MCF 10A (cell line): ENCODE measurements at regions of chr4 and their contacts with region 1.

Region 1: DNA sequence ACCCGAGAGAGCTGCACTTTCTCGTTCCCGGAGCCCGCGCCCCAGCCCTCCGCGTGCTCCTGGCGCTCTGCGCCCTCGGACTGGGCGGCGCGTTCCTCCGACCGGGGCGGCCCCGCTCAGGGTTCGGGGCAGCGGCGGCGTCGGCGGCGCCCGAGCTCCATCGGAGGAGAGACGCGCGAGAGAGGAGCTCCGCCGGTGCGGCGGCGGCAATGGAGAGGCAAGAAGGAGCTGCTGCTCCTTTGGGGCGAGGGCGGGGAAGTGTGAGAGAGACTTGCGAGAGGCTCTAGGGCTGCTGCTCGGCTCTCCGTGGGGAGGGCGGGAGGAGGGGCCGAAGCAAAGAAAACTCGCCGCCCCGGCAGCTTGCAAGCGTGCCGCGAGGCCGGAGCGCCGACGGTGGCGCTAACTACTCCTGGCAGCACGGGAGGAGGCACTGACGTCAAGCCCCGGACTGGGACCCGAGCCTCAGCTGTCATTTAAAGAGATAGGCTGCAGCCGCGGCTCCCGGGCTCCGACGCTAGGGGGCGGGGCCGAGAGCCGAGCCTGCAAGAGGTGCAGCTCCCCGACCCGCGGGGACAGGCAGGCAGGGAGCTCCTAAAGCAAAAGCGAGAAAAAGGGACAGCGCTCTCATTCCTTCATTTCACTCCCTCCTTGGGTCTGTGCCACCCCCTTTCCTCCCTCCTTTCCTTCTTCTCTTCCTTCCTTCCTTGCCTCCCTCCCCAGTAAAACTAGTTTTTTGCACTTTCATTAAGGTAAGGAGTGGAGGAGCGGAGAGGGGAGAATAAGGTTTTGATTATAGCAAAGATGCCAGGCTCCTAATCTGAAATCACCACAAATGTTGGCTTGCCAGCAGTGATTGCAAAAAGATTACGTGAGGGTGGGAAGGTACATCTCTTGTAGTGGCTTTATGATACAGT is at the start of gene KCTD8:
- DNase-seq: peak; percentile 92
- H3K4me3 Mint-ChIP-seq: peak within 1 kb of the TSS; percentile 76
- H3K27ac Mint-ChIP-seq: no peak within 1 kb of the TSS
- H3K4me1 Mint-ChIP-seq: peaks cover 13% of the 10 kb centered on the region
- H3K27me3 Mint-ChIP-seq: no peaks in the 10 kb centered on the region
- CTCF ChIP-seq: peak; percentile 63
- total RNA-seq, gene KCTD8: 0.16 and 0.76 TPM in 2 replicates

Region 2: GRCh38 chr4:43331226-43332051 is 1117.4 kb before region 1 on chr4:
- CTCF ChIA-PET with region 1: no interaction called
- POLR2A ChIA-PET with region 1: no interaction called
- intact Hi-C with region 1: loop called (anchors 10 kb)
- DNase-seq: peak; percentile 83
- H3K4me3 Mint-ChIP-seq: no peak overlapping the region
- H3K27ac Mint-ChIP-seq: peak overlapping the region; percentile 6
- H3K4me1 Mint-ChIP-seq: peaks cover 30% of the 10 kb centered on the region
- H3K27me3 Mint-ChIP-seq: no peaks in the 10 kb centered on the region
- CTCF ChIP-seq: no peak

Region 3: GRCh38 chr4:43716721-43717395 is 731.9 kb before region 1 on chr4:
- CTCF ChIA-PET with region 1: no interaction called
- POLR2A ChIA-PET with region 1: no interaction called
- intact Hi-C with region 1: no loop called
- DNase-seq: no peak
- H3K4me3 Mint-ChIP-seq: no peak overlapping the region
- H3K27ac Mint-ChIP-seq: no peak overlapping the region
- H3K4me1 Mint-ChIP-seq: no peaks in the 10 kb centered on the region
- H3K27me3 Mint-ChIP-seq: no peaks in the 10 kb centered on the region
- CTCF ChIP-seq: no peak

Region 4: DNA sequence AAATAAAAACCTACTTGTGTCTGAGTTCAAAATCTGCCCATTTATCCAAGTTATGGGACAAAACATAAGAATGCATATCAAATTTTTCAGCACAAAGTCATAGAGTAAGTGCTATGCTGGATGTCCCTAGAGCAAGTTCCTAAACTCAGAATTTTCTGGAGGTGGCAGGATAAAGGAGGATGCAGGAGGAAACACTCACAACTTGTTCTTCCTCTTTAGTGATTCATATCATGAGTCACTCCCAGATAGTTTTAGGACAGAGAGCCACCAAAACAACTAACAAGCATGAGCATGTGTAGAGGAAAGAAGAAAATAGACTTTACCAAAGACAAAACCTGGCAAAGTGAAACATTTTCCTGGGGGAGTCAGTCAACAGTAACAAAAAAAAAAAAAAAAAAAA is 302.9 kb before region 1 on chr4:
- CTCF ChIA-PET with region 1: no interaction called
- POLR2A ChIA-PET with region 1: no interaction called
- intact Hi-C with region 1: no loop called
- DNase-seq: peak; percentile 74
- H3K4me3 Mint-ChIP-seq: peak overlapping the region; percentile 0
- H3K27ac Mint-ChIP-seq: peak overlapping the region; percentile 78
- H3K4me1 Mint-ChIP-seq: peaks cover 33% of the 10 kb centered on the region
- H3K27me3 Mint-ChIP-seq: no peaks in the 10 kb centered on the region
- CTCF ChIP-seq: no peak

Region 5: DNA sequence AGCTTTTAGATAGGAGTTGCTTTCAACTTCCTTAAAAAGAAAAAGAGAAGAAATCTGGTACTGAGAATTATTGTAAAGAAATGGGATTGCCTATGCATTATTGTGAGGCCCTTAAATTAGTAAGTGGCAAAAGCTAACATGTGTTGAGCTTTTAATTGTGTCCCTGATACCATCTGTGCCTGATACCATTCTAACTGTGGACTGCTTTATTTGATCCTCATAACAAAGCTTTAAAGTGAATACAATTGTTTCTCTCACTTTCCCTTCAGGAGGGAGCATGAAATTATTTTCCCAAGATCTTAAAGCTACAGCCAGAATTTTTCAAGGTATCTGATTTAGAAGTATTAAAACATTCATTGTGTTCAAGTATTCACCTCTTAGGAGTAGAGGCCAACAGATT is 10.1 kb before region 1 on chr4:
- CTCF ChIA-PET with region 1: interaction called, 14 read pairs
- POLR2A ChIA-PET with region 1: interaction called, 11 read pairs
- intact Hi-C with region 1: no loop called
- DNase-seq: no peak
- H3K4me3 Mint-ChIP-seq: no peak overlapping the region
- H3K27ac Mint-ChIP-seq: no peak overlapping the region
- H3K4me1 Mint-ChIP-seq: no peaks in the 10 kb centered on the region
- H3K27me3 Mint-ChIP-seq: no peaks in the 10 kb centered on the region
- CTCF ChIP-seq: no peak

Region 6: DNA sequence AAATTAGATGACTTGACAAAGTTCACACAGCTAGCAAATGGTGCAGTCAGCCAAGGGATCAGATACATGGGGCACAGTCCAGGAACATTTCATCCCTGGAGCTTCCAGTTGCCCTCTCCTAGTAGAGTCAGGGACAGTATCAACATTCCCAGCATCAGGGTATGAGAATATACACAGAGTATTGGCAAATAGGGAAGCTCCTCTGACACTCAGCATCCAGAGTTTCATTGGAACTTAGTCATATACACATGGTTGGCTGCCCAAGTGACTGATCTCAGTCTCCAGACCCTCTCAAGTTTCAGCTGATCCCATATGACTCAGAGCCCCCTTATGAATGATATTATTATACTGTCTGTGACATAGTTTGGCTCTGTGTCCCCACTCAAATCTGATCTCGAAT is 13.5 kb after region 1 on chr4:
- CTCF ChIA-PET with region 1: interaction called, 18 read pairs
- POLR2A ChIA-PET with region 1: interaction called, 3 read pairs
- intact Hi-C with region 1: no loop called
- DNase-seq: no peak
- H3K4me3 Mint-ChIP-seq: no peak overlapping the region
- H3K27ac Mint-ChIP-seq: no peak overlapping the region
- H3K4me1 Mint-ChIP-seq: no peaks in the 10 kb centered on the region
- H3K27me3 Mint-ChIP-seq: no peaks in the 10 kb centered on the region
- CTCF ChIP-seq: no peak

Region 7: GRCh38 chr4:44493924-44494323 is 45.1 kb after region 1 on chr4:
- CTCF ChIA-PET with region 1: interaction called, 17 read pairs
- POLR2A ChIA-PET with region 1: interaction called, 4 read pairs
- intact Hi-C with region 1: no loop called
- DNase-seq: peak; percentile 50
- H3K4me3 Mint-ChIP-seq: no peak overlapping the region
- H3K27ac Mint-ChIP-seq: no peak overlapping the region
- H3K4me1 Mint-ChIP-seq: peaks cover 10% of the 10 kb centered on the region
- H3K27me3 Mint-ChIP-seq: no peaks in the 10 kb centered on the region
- CTCF ChIP-seq: peak; percentile 26

Region 8: GRCh38 chr4:44629280-44629866 is 180.6 kb after region 1 on chr4:
- CTCF ChIA-PET with region 1: interaction called, 18 read pairs
- POLR2A ChIA-PET with region 1: no interaction called
- intact Hi-C with region 1: loop called (anchors 1 kb)
- DNase-seq: peak; percentile 72
- H3K4me3 Mint-ChIP-seq: no peak overlapping the region
- H3K27ac Mint-ChIP-seq: peak overlapping the region; percentile 71
- H3K4me1 Mint-ChIP-seq: no peaks in the 10 kb centered on the region
- H3K27me3 Mint-ChIP-seq: no peaks in the 10 kb centered on the region
- CTCF ChIP-seq: peak; percentile 74

Region 9: GRCh38 chr4:44678094-44679041 is 229.6 kb after region 1 on chr4 and contains the start of gene GUF1:
- CTCF ChIA-PET with region 1: no interaction called
- POLR2A ChIA-PET with region 1: interaction called, 10 read pairs
- intact Hi-C with region 1: no loop called
- DNase-seq: peak; percentile 91
- H3K4me3 Mint-ChIP-seq: peak within 1 kb of the TSS; percentile 96
- H3K27ac Mint-ChIP-seq: peak within 1 kb of the TSS; percentile 95
- H3K4me1 Mint-ChIP-seq: peaks cover 12% of the 10 kb centered on the region
- H3K27me3 Mint-ChIP-seq: no peaks in the 10 kb centered on the region
- CTCF ChIP-seq: no peak
- total RNA-seq, gene GUF1: 50.2 and 51.7 TPM in 2 replicates